BJ (cell line): ENCODE measurements at regions of chr17 and their contacts with region 1.

Region 1: GRCh38 chr17:16273499-16273898 is 56.5 kb downstream of the PIGL start:
- DNase-seq: no peak
- H3K4me3 ChIP-seq: no peak overlapping the region
- H3K27me3 ChIP-seq: no peaks in the 10 kb centered on the region
- CTCF ChIP-seq: no peak

Region 2: DNA sequence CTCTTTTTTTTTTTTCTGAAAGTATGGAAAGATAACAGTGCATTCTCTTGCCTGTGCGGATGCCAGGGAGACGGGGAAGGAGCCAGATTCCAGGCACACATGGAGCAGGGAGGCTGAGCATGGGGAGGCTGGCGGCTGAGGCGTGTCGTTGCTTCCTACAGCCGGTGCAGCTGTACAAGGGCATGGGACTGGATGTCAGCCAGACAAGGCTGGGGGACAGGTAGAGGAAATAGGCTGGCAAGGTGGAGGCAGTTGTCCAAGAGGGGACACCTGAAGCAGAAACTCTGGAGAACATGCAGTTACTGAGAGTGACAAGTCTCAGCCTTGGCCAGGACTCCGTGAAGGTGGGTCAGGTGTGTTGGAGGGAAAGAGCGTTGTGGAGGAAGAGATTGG is 345.2 kb before region 1 on chr17:
- CTCF ChIA-PET with region 1: no interaction called
- POLR2A ChIA-PET with region 1: interaction called, 12 read pairs
- DNase-seq: no peak
- H3K4me3 ChIP-seq: no peak overlapping the region
- H3K27me3 ChIP-seq: peaks cover 10% of the 10 kb centered on the region
- CTCF ChIP-seq: no peak

Region 3: DNA sequence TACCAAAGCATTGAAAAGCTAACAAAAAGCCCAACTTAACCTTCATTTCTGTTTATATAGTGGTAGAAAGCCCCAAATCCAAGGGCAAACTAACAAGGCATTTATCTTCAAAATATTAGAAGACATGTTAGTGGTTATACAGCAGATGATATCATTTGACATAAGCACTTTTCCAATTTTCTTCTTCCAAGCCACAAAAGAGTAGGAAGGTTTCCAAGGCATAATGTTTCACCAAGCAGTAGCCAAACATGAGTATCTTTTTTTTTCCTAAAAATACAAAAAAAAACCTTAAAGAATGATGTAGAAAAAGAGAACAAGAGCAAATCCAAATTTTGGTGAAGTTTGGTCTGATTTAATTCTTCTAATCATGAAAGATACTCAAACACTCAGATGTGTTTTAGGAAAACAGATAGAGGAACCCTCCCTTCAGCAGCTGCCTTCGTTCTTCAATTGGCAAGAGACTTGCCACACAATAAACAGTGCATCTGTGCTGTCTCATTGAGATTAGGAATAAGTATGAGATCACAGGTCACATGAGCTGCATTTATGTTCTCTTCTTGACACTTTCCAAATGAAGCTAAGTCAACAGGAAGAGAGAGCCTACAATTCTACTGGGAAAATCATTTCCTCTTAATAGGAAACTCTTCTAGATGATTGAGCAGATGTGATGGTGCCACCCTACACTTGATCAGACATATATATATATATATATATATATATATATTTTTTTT is 167.2 kb before region 1 on chr17:
- CTCF ChIA-PET with region 1: no interaction called
- POLR2A ChIA-PET with region 1: no interaction called
- DNase-seq: no peak
- H3K4me3 ChIP-seq: no peak overlapping the region
- H3K27me3 ChIP-seq: no peaks in the 10 kb centered on the region
- CTCF ChIP-seq: no peak

Region 4: DNA sequence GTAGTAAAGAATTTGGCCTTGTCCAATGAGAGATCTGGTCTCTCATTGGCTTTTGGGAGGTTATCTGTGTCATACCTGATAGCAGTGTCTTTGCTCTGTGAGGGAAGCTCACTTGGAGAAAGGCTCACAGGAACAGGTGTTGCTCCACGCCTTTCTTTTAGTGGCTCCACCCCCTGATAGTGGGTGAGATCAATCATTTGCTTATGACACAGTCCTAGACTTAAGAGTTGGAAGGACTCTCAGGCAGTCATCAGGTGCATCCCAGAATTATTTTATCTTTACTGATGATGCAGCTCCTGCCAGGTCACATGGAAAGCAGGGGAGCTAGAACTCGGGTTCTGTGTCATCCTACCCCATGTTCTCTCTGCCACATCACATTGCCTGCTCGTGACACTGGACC is 20.4 kb after region 1 on chr17:
- CTCF ChIA-PET with region 1: no interaction called
- POLR2A ChIA-PET with region 1: no interaction called
- DNase-seq: no peak
- H3K4me3 ChIP-seq: no peak overlapping the region
- H3K27me3 ChIP-seq: no peaks in the 10 kb centered on the region
- CTCF ChIP-seq: no peak